Activated T-helper 1 cell treated with anti-CD3 and anti-CD28 coated beads, Interleukin-12 subunit alpha, Interleukin-12 subunit beta, Interleukin-2, Interleukin-4 antibody, amounts not matched to agents 30 ng/mL and 10 ng/mL and 1 ng/mL, durations not matched to agents 14 hours and 24 hours and 36 hours (primary cell): ENCODE measurements at regions of chr19 and their contacts with region 1.

Region 1: DNA sequence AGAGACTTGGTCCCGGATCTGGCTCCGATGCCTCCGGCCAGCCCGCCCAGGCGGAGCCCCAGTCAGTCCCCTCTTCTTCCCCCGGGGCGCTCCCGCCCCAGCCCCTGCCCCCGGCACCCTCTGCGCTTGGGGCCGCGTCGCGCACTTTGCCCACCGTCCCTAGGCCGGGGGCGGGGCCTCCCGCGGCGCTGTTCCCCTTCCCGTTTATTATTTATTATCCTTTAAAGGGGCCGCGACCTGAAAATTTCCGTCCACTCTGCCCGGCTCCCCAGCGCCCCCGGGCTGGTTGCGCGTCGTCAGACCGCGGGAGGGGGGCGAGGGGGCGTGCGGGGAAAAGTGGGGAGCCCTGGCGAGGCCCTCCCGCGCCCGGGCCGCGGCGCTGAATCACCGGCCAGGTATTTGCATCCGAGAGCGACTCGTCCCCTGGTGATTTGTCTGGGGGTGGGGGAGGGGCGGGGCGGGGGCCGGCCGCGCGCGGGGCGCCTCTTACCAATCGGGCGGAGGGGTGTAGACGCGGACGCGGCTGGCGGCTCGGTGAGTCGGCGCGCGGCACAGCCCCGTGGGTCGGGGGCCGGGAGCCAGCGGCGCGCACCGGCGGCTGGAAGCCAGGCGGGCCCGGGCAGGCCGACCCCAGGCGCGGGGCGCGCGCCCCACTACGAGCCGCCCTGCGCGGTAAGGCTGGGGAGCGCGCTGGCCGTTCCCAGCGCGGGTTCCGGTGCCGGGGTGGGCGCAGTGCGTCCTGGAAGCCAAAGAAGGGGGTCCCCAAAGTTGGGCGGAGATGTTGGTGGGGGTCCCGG is at the start of gene ARID3A:
- DNase-seq: peak; percentile 74
- H3K4me3 Mint-ChIP-seq: peak within 1 kb of the TSS; percentile 82
- H3K27ac Mint-ChIP-seq: peak within 1 kb of the TSS; percentile 73
- H3K4me1 Mint-ChIP-seq: peaks cover 13% of the 10 kb centered on the region
- H3K27me3 Mint-ChIP-seq: no peaks in the 10 kb centered on the region
- total RNA-seq, gene ARID3A: 32.5 and 35.0 TPM in 2 replicates

Region 2: DNA sequence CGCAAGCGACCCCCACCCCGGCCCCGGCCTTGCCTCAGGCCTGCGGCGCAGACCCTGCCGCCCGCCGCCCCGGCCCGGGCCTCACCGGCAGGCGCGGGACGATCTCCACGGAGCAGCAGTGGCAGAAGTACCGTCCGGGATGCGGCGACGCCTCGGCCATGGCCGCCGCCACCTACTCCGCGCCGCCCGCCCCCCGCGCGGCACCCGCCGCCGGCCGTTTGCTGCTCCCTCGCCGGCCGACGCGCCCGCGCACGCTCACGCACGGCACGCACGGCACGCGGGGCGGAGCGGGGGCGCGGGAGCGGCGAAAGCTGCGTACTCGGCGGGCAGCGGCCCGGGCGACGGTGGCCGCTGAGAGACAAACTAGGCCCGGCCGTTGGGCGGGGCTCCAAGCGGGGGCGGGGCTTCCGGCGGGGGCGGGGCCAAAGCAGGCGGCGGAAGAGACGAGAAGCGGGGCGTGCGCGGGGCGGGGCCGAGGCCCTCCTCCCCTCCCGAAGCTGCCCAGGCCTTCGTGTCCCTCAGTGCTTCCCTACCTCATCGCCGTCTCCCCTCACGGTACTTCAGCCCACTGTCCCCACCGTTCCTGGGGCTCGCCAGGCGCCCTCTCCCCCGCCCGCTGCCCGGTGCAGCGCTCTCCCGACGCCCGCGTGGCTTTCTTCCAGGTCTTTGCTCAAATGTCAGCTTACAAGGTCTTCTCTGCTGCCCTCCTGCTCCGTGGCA is 262.6 kb before region 1 on chr19 and contains the start of gene RNF126:
- intact Hi-C with region 1: loop called (anchors 5 kb)
- DNase-seq: peak; percentile 84
- H3K4me3 Mint-ChIP-seq: peak within 1 kb of the TSS; percentile 95
- H3K27ac Mint-ChIP-seq: peak within 1 kb of the TSS; percentile 97
- H3K4me1 Mint-ChIP-seq: peaks cover 33% of the 10 kb centered on the region
- H3K27me3 Mint-ChIP-seq: no peaks in the 10 kb centered on the region
- total RNA-seq, gene RNF126: 107 and 110 TPM in 2 replicates

Region 3: GRCh38 chr19:892243-893050 is 33.3 kb before region 1 on chr19:
- intact Hi-C with region 1: loop called (anchors 1 kb)
- DNase-seq: no peak
- H3K4me3 Mint-ChIP-seq: peak overlapping the region; percentile 94
- H3K27ac Mint-ChIP-seq: peak overlapping the region; percentile 82
- H3K4me1 Mint-ChIP-seq: peaks cover 8% of the 10 kb centered on the region
- H3K27me3 Mint-ChIP-seq: no peaks in the 10 kb centered on the region

Region 4: GRCh38 chr19:984165-984967 is 58.6 kb after region 1 on chr19 and contains the start of gene WDR18:
- intact Hi-C with region 1: loop called (anchors 1 kb)
- DNase-seq: peak; percentile 89
- H3K4me3 Mint-ChIP-seq: peak within 1 kb of the TSS; percentile 96
- H3K27ac Mint-ChIP-seq: peak within 1 kb of the TSS; percentile 91
- H3K4me1 Mint-ChIP-seq: no peaks in the 10 kb centered on the region
- H3K27me3 Mint-ChIP-seq: peaks cover 5% of the 10 kb centered on the region
- total RNA-seq, gene WDR18: 105 and 108 TPM in 2 replicates

Region 5: DNA sequence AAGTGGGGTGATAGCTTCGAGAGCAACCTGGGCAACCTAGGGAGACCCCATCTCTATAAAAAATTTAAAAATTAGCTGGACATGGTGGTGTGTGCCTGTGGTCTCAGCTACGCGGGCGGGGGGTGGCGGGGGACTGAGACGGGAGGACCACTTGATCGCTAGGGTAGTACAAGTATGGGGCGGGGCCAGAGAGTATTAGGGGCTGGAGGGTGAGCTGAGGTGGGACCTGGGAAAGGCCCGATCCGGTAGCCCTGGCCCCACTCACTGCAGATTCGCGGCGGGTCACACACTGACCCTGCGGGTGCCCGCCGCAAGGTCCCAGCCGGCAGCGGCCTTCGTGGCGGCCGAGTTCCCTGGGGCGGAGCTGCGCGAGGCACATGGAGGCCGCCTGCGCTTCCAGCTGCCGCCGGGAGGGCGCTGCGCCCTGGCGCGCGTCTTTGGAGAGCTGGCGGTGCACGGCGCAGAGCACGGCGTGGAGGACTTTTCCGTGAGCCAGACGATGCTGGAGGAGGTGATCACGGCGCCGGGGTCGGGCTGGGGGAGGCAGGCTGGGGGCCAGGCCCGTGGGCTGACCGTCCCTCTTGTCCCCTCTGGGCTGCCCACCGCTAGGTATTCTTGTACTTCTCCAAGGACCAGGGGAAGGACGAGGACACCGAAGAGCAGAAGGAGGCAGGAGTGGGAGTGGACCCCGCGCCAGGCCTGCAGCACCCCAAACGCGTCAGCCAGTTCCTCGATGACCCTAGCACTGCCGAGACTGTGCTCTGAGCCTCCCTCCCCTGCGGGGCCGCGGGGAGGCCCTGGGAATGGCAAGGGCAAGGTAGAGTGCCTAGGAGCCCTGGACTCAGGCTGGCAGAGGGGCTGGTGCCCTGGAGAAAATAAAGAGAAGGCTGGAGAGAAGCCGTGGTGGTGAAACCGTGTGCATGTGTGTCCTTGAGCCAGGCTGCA is 139.2 kb after region 1 on chr19:
- intact Hi-C with region 1: loop called (anchors 5 kb)
- DNase-seq: peak; percentile 72
- H3K4me3 Mint-ChIP-seq: peak overlapping the region; percentile 67
- H3K27ac Mint-ChIP-seq: peak overlapping the region; percentile 74
- H3K4me1 Mint-ChIP-seq: peaks cover 15% of the 10 kb centered on the region
- H3K27me3 Mint-ChIP-seq: no peaks in the 10 kb centered on the region

Region 6: GRCh38 chr19:1113033-1113985 is 187.6 kb after region 1 on chr19:
- intact Hi-C with region 1: no loop called
- DNase-seq: peak; percentile 66
- H3K4me3 Mint-ChIP-seq: no peak overlapping the region
- H3K27ac Mint-ChIP-seq: no peak overlapping the region
- H3K4me1 Mint-ChIP-seq: no peaks in the 10 kb centered on the region
- H3K27me3 Mint-ChIP-seq: no peaks in the 10 kb centered on the region

Region 7: GRCh38 chr19:1249298-1249989 is 323.7 kb after region 1 on chr19:
- intact Hi-C with region 1: loop called (anchors 2 kb)
- DNase-seq: peak; percentile 91
- H3K4me3 Mint-ChIP-seq: peak overlapping the region; percentile 82
- H3K27ac Mint-ChIP-seq: peak overlapping the region; percentile 86
- H3K4me1 Mint-ChIP-seq: peaks cover 5% of the 10 kb centered on the region
- H3K27me3 Mint-ChIP-seq: no peaks in the 10 kb centered on the region